Activated CD8-positive, alpha-beta memory T cell treated with anti-CD3 and anti-CD28 coated beads, Interleukin-2, amount 10 ng/mL, durations not matched to agents 7 days and 5 days (primary cell): ENCODE measurements at regions of chr11 and their contacts with region 1.

Region 1: DNA sequence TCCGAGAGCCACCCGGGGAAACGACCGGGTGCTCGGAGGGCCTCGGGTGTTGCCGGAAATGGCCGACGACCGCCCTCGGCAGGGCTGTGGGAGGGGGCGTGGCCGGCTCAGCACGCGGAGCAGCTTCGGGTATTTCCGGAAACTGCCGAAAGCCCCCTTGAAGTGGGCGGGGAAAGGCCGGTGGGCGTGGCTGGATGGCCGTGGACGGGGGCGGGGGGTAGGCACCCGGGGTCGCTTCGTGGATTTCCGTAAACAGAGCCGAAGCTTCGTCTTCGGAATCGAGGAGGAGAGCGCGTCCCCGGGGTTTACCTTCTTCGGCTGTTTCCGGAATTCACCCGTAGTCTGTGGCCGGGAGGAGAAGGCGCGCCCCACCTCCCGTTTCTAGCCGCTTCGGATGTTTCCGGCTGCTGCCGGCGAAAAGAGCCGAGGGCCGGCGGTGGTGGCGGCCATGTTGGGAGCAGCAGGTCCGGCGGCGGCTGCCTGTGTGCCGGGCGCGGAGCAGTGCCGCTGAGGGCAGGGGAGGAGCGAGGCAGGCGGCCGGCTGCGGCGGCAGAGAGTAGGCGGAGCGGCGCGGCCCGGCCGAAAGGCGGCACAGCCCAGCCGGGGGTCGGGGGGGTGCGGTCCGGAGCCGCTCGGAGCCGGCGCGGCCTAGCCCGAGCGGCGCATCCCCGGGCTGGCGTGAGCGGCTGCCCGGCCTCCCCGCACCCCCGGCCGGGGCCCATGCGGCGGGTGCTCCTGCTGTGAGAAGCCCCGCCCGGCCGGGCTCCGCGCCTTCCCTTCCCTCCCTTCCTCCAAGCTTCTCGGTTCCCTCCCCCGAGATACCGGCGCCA is at the start of gene MARK2:
- DNase-seq: peak; percentile 99
- ATAC-seq: peak; percentile 89
- H3K4me3 Mint-ChIP-seq: peak within 1 kb of the TSS; percentile 85
- H3K27ac Mint-ChIP-seq: peak within 1 kb of the TSS; percentile 88
- H3K4me1 Mint-ChIP-seq: peaks cover 55% of the 10 kb centered on the region
- H3K27me3 Mint-ChIP-seq: no peaks in the 10 kb centered on the region
- total RNA-seq, gene MARK2: 57.2 to 57.9 TPM

Region 2: GRCh38 chr11:63745304-63746170 is 93.4 kb before region 1 on chr11:
- CTCF ChIA-PET with region 1: no interaction called
- DNase-seq: no peak
- ATAC-seq: no peak
- H3K4me3 Mint-ChIP-seq: no peak overlapping the region
- H3K27ac Mint-ChIP-seq: no peak overlapping the region
- H3K4me1 Mint-ChIP-seq: no peaks in the 10 kb centered on the region
- H3K27me3 Mint-ChIP-seq: no peaks in the 10 kb centered on the region

Region 3: GRCh38 chr11:63791495-63792167 is 47.3 kb before region 1 on chr11:
- CTCF ChIA-PET with region 1: no interaction called
- DNase-seq: no peak
- ATAC-seq: no peak
- H3K4me3 Mint-ChIP-seq: no peak overlapping the region
- H3K27ac Mint-ChIP-seq: no peak overlapping the region
- H3K4me1 Mint-ChIP-seq: no peaks in the 10 kb centered on the region
- H3K27me3 Mint-ChIP-seq: peaks cover 6% of the 10 kb centered on the region

Region 4: DNA sequence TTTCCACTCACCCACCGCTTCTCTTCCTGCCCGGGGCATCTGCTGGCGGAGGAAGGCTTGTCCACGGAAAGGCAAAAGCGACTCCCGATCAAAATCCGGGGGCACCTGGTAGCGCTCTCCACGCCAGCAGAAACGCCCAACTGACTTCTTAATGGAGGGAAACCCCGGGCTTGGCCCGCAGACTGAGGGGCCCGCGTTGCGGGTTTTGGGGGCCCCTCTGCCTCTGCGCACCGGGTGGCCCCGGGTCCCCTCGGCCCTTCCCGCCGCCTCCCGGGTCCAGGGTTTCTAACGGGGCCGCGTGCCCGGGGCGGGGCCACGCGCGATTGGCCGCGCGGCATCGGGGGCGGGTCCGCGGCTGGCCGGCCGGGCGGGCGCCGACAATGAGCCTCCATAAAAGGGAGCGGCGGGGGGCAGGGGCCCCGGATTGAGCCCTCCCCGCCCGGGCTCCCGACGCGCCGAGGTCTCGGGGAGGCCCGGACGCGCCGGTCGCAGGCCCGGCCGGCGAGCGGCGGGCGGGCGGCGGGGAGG is 25.8 kb before region 1 on chr11 and contains the start of gene SPINDOC:
- CTCF ChIA-PET with region 1: interaction called, 16 read pairs
- DNase-seq: peak; percentile 84
- ATAC-seq: peak; percentile 93
- H3K4me3 Mint-ChIP-seq: peak within 1 kb of the TSS; percentile 79
- H3K27ac Mint-ChIP-seq: peak within 1 kb of the TSS; percentile 71
- H3K4me1 Mint-ChIP-seq: peaks cover 34% of the 10 kb centered on the region
- H3K27me3 Mint-ChIP-seq: no peaks in the 10 kb centered on the region
- total RNA-seq, gene SPINDOC: 53.4 to 55.8 TPM

Region 5: GRCh38 chr11:63871962-63872799 is 33.3 kb after region 1 on chr11:
- CTCF ChIA-PET with region 1: interaction called, 44 read pairs
- DNase-seq: peak; percentile 77
- ATAC-seq: peak; percentile 74
- H3K4me3 Mint-ChIP-seq: no peak overlapping the region
- H3K27ac Mint-ChIP-seq: peak overlapping the region; percentile 19
- H3K4me1 Mint-ChIP-seq: peaks cover 64% of the 10 kb centered on the region
- H3K27me3 Mint-ChIP-seq: no peaks in the 10 kb centered on the region

Region 6: DNA sequence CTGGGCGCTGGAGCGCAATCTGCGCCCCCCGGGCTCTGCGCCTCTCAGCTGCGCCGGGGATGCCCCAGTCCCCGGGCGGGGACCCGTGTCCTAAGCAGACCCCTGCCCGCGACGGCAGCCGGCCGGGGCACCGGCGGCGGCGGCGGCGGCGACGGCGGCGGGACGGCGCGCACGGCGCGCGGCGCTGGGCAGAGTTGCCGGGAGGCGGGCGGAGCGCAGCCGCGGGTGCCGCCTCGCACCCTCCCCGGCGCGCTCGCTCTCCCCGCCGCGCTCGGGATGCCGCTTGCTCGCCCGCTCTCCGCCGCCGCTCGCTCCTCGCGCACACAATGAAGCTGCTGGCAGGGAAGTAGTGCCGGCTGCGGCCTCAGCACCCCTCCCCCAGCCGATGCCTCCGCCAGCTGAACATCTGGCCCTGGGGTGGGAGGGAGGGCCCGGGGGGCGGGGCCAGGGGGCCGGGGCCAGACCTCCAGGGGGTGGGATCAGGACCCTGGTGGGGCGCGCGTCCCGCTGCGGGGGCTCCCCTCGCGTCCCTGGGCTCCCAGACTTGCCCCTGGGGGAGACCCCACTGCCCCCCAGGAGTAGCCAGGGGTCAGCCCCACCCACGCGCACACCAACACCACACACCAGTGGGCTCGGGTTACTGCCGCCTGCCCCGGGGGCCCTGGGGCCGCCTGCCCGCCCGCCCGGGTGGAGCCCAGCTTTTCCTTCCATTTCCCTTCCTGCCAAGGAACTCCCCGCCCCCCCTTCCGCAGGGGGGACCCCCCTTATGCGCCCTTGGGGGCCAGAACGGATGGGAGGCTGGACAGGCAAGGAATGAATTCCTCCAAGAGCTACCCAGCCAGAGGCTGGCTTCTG is 78.2 kb after region 1 on chr11 and contains the start of gene RCOR2:
- CTCF ChIA-PET with region 1: interaction called, 19 read pairs
- DNase-seq: peak; percentile 67
- ATAC-seq: peak; percentile 77
- H3K4me3 Mint-ChIP-seq: peak within 1 kb of the TSS; percentile 56
- H3K27ac Mint-ChIP-seq: no peak within 1 kb of the TSS
- H3K4me1 Mint-ChIP-seq: peaks cover 10% of the 10 kb centered on the region
- H3K27me3 Mint-ChIP-seq: peaks cover 11% of the 10 kb centered on the region
- total RNA-seq, gene RCOR2: 0.16 to 0.47 TPM

Region 7: DNA sequence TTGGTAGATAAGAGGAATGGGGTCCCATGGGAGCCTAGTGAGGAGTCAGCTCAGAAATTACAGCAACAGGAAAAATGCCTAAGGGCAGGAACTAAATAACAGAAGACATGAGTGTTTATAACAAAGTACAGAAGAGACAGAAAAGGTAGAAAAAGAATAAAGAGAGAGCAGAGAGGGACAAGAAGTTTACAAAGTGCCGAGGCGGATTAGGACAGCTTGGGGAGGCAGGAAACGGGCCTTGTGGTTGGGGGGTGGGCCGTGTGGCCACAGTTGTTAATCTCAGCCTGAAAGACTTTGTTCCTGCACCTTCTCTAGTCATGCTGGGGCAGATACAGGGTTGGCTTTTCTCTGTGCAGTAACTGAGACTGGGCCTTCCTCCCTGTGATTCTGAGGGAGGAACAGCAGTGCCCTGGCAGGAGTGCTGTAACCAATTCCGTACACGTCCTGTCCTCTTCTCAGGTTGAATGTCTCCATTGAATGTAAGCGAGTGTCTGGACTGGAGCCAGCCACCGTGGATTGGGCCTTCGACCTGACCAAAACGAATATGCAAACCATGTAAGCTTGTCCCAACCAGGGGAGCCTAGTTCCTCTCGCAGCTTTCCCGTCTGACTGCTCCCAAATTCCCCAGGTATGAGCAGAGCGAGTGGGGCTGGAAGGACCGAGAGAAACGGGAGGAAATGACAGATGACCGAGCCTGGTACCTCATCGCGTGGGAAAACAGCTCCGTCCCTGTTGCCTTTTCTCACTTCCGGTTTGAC is 113.1 kb after region 1 on chr11:
- CTCF ChIA-PET with region 1: interaction called, 136 read pairs
- DNase-seq: peak; percentile 88
- ATAC-seq: peak; percentile 85
- H3K4me3 Mint-ChIP-seq: peak overlapping the region; percentile 57
- H3K27ac Mint-ChIP-seq: peak overlapping the region; percentile 88
- H3K4me1 Mint-ChIP-seq: peaks cover 34% of the 10 kb centered on the region
- H3K27me3 Mint-ChIP-seq: no peaks in the 10 kb centered on the region

Region 8: DNA sequence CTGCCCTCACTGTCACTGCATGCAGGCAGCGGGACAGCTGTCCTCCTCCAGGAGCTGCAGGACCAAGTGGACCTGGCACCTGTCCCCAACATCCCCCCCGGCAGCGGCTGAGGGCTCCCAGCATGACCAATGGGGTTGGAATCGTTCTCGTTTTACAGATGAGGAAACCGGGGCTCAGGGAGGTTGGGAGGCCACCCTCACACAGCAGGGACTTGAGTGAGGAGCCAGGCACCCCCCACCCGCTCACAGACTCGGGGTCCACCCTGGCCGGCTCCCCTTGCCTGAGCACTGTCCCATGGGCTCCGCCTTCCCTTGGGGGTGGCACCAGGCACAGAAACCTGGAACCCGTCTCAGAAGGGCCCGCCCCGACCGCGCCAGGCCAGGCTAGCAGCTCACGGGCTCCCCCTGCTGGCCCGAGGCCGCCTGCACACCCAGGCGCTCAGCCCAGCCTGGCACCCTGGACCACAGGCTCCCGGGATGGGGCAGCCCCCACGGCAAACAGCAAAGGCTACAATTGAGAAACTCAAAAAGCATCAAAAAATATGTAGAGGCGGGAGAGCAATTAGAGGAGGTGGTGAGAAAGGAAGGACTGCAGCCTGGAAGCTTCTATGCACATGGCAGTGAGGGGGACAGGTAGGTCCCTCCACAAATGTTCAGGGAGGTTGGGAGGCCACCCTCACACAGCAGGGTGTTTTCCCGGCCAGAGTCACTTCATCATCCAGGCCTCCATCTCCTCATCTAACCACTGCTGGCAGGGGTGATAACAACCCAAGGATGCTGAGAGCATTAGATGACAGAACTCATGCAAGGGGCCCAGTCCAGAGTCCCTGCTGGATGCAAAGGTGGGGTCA is 314.2 kb after region 1 on chr11:
- CTCF ChIA-PET with region 1: interaction called, 26 read pairs
- DNase-seq: peak; percentile 76
- ATAC-seq: peak; percentile 96
- H3K4me3 Mint-ChIP-seq: no peak overlapping the region
- H3K27ac Mint-ChIP-seq: no peak overlapping the region
- H3K4me1 Mint-ChIP-seq: no peaks in the 10 kb centered on the region
- H3K27me3 Mint-ChIP-seq: peaks cover 9% of the 10 kb centered on the region